CD8-positive, alpha-beta T cell (primary cell): ENCODE measurements at regions of chr1 and their contacts with region 1.

Region 1: GRCh38 chr1:154936555-154937084 is at the start of gene PMVK:
- DNase-seq: peak; percentile 89 to 98 (median 96)
- ATAC-seq: peak; percentile 85
- H3K4me3 ChIP-seq: peak within 1 kb of the TSS; percentile 87 to 90
- H3K4me3 Mint-ChIP-seq: peak within 1 kb of the TSS; percentile 97
- H3K27ac ChIP-seq: peak within 1 kb of the TSS; percentile 94 to 97
- H3K27ac Mint-ChIP-seq: peak within 1 kb of the TSS; percentile 99
- H3K4me1 ChIP-seq: peaks cover 32% of the 10 kb centered on the region
- H3K4me1 Mint-ChIP-seq: peaks cover 49% of the 10 kb centered on the region
- H3K27me3 ChIP-seq: no peaks in the 10 kb centered on the region
- H3K27me3 Mint-ChIP-seq: no peaks in the 10 kb centered on the region
- CTCF ChIP-seq: no peak
- total RNA-seq, gene PMVK: 6.7 to 7.3 TPM

Region 2: DNA sequence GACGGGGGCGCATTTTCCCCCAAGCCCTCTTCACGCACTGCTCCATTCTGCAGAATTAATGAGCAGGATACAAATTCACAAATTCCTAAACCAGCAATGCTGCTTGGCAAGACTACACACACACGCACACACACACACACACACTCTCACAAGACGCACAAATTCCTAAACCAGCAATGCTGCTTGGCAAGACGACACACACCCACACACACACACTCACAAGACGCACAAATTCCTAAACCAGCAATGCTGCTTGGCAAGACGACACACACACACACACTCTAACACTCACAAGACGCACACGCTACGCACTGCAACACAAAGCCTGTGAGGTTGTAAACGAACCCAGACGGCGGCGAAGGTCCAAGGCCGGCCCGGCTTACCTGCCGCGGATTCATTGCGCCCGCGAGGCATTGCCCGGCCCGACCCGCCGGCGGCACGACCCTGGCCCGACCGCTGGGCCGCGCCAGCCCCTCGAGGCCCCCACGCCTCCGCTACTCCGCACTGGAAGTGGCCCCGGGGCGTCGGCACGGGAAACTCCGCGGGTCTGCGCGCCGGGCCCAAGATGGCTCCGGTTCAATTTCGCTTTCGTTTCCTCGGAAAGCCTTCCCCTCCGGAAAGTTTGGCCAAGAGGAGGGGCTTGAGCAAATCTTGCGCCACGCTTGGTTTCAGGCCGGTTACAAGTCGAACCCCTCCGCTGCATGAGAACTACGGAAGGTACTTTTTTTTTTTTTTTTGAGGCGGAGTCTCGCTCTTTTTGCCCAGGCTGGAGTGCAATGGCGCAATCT is 328.8 kb before region 1 on chr1 and contains the start of gene ADAR:
- CTCF ChIA-PET with region 1: no interaction called
- POLR2A ChIA-PET with region 1: interaction called, 5 read pairs
- intact Hi-C with region 1: loop called (anchors 1 kb)
- DNase-seq: peak; percentile 72 to 98 (median 87)
- ATAC-seq: peak; percentile 85
- H3K4me3 ChIP-seq: peak within 1 kb of the TSS; percentile 89 to 90
- H3K4me3 Mint-ChIP-seq: peak within 1 kb of the TSS; percentile 98
- H3K27ac ChIP-seq: peak within 1 kb of the TSS; percentile 92 to 96
- H3K27ac Mint-ChIP-seq: peak within 1 kb of the TSS; percentile 98
- H3K4me1 ChIP-seq: peaks cover 59% of the 10 kb centered on the region
- H3K4me1 Mint-ChIP-seq: peaks cover 73% of the 10 kb centered on the region
- H3K27me3 ChIP-seq: no peaks in the 10 kb centered on the region
- H3K27me3 Mint-ChIP-seq: no peaks in the 10 kb centered on the region
- CTCF ChIP-seq: no peak
- total RNA-seq, gene ADAR: 221 to 238 TPM

Region 3: DNA sequence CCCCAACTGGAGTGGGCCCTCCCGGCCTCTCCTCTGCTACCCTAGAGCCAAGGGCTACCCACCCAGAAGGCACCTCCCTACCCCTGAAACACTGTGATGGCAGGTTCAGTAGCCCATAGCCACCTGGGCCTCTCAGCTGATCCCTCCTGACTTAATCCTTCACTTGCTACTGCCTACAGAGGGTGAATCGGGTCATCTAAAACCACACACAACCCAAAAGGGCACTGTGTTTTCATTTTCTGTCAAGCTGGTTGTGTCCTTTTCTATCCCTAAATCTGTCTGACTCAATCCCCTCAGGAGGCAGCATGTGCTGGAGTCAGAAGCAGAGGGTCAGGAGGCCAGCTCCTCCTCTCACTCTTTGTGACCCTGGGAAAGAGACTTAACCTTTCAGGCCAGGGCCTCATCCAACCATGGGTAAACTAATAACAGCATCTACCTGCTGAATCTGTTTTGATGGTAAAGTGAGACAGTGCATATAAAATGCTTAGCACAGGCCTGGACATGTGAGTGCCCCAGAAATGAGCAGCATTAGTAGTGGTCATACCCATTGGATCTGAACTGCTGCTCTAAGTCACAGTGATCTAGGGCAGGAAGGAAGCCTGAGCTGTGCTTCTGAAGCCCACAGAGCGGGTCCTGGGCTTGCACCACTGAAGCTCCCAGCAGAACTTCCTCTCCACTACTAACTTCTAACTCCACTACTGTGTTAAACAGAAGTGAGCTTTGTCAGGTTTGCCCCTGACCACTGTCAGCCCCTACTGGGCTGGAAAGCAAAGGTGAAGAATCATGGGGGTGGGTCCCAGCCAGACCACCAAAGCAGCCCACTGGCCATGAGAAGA is 11.1 kb before region 1 on chr1:
- CTCF ChIA-PET with region 1: interaction called, 10 read pairs
- POLR2A ChIA-PET with region 1: no interaction called
- intact Hi-C with region 1: no loop called
- DNase-seq: no peak
- ATAC-seq: no peak
- H3K4me3 ChIP-seq: no peak overlapping the region
- H3K4me3 Mint-ChIP-seq: no peak overlapping the region
- H3K27ac ChIP-seq: no peak overlapping the region
- H3K27ac Mint-ChIP-seq: peak overlapping the region; percentile 18
- H3K4me1 ChIP-seq: no peaks in the 10 kb centered on the region
- H3K4me1 Mint-ChIP-seq: peaks cover 9% of the 10 kb centered on the region
- H3K27me3 ChIP-seq: no peaks in the 10 kb centered on the region
- H3K27me3 Mint-ChIP-seq: no peaks in the 10 kb centered on the region
- CTCF ChIP-seq: no peak

Region 4: DNA sequence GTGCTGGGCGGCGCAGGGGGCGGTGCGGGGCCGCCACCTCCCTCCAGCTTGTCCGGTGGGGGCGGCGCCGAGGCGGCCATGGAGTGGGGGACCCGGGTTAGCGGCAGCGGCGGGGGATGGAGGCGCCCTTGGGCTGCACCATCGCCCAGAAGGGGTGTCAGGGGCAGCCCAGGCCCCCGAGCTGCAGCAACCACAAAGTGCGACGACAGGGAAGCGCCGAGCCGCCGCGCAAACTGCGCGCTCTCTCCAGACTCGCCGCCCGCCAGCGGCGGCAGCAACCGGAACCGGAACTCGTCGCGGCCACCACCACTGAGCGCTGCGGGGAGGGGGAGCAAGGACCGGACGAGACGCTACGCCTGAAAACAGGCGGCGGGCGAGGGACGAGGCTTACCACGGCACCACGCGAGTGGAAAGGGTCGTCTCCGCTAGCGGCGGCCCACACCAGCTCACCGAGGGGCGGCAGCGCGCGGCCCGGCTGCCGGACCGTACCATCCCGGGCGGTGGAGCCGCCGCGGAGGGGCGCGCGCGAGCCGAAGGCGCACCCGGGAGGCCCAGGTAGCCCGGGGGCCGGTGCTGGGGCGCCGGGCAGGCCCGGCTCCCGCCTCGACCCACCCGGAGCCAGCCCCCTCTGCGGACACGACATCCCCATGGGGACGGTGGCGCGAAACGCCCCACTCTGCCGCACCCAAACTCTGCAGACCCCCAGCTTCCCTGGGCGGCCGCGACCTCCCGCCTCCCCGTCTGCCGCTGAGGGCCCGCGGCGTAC is 25.1 kb after region 1 on chr1 and contains the start of gene PYGO2:
- CTCF ChIA-PET with region 1: interaction called, 26 read pairs
- POLR2A ChIA-PET with region 1: interaction called, 52 read pairs
- intact Hi-C with region 1: loop called (anchors 1 kb)
- DNase-seq: peak; percentile 62 to 90 (median 80)
- ATAC-seq: peak; percentile 75
- H3K4me3 ChIP-seq: peak within 1 kb of the TSS; percentile 68 to 96
- H3K4me3 Mint-ChIP-seq: peak within 1 kb of the TSS; percentile 91
- H3K27ac ChIP-seq: peak within 1 kb of the TSS; percentile 91 to 95
- H3K27ac Mint-ChIP-seq: peak within 1 kb of the TSS; percentile 93
- H3K4me1 ChIP-seq: peaks cover 27% of the 10 kb centered on the region
- H3K4me1 Mint-ChIP-seq: peaks cover 42% of the 10 kb centered on the region
- H3K27me3 ChIP-seq: no peaks in the 10 kb centered on the region
- H3K27me3 Mint-ChIP-seq: no peaks in the 10 kb centered on the region
- CTCF ChIP-seq: peak; percentile 69
- total RNA-seq, gene PYGO2: 25.1 to 26.7 TPM

Region 5: GRCh38 chr1:154982897-154983648 is 46.5 kb after region 1 on chr1 and contains the start of gene FLAD1:
- CTCF ChIA-PET with region 1: interaction called, 6 read pairs
- POLR2A ChIA-PET with region 1: interaction called, 5 read pairs
- intact Hi-C with region 1: loop called in 1 of 2 experiments (anchors 2 kb)
- DNase-seq: peak; percentile 86 to 99 (median 94)
- ATAC-seq: peak; percentile 98
- H3K4me3 ChIP-seq: peak within 1 kb of the TSS; percentile 57 to 86
- H3K4me3 Mint-ChIP-seq: no peak within 1 kb of the TSS
- H3K27ac ChIP-seq: peak within 1 kb of the TSS; percentile 51 to 82
- H3K27ac Mint-ChIP-seq: no peak within 1 kb of the TSS
- H3K4me1 ChIP-seq: peaks cover 12% of the 10 kb centered on the region
- H3K4me1 Mint-ChIP-seq: peaks cover 12% of the 10 kb centered on the region
- H3K27me3 ChIP-seq: no peaks in the 10 kb centered on the region
- H3K27me3 Mint-ChIP-seq: no peaks in the 10 kb centered on the region
- CTCF ChIP-seq: no peak
- total RNA-seq, gene FLAD1: 17.4 to 19.0 TPM

Region 6: DNA sequence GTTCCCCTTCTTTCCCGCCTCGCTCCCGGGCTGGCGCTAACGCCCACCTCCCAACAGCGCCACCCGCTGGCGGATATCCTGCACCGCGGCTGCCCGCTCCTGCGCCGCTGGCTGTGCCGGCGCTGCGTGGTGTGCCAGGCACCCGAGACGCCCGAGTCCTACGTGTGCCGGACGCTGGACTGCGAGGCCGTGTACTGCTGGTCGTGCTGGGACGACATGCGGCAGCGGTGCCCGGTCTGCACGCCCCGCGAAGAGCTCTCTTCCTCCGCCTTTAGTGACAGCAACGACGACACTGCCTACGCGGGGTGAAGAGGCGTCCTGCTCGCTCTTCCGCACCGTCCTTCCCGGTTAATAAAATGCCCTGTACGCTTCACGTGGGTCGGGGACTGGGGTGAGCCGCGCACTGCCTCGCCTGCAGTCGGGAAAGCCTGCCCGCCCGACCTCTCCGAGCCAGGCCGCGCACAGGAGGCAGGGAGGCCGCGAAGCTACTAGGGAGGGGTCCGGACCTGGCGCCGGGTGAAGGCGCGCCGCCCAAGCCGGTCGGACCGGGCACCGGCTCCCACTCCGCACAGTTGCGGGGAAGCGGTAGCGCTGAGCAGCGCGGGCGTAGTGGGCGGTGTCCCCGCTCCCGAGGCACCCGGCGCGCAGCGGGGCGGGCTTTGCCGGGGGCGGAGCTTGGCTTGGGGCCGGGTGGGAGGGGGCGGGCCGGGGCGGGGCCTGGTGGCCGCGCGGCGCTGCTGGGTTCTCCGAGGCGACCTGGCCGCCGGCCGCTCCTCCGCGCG is 114.1 kb after region 1 on chr1 and contains the start of gene ADAM15:
- CTCF ChIA-PET with region 1: no interaction called
- POLR2A ChIA-PET with region 1: interaction called, 3 read pairs
- intact Hi-C with region 1: loop called in 1 of 2 experiments (anchors 1 kb)
- DNase-seq: peak; percentile 64 to 88 (median 80)
- ATAC-seq: peak; percentile 83
- H3K4me3 ChIP-seq: peak within 1 kb of the TSS; percentile 86 to 94
- H3K4me3 Mint-ChIP-seq: peak within 1 kb of the TSS; percentile 86
- H3K27ac ChIP-seq: peak within 1 kb of the TSS; percentile 45 to 65
- H3K27ac Mint-ChIP-seq: peak within 1 kb of the TSS; percentile 85
- H3K4me1 ChIP-seq: peaks cover 27% of the 10 kb centered on the region
- H3K4me1 Mint-ChIP-seq: peaks cover 19% of the 10 kb centered on the region
- H3K27me3 ChIP-seq: no peaks in the 10 kb centered on the region
- H3K27me3 Mint-ChIP-seq: no peaks in the 10 kb centered on the region
- CTCF ChIP-seq: peak; percentile 99
- total RNA-seq, gene ADAM15: 10.8 to 11.8 TPM

Region 7: GRCh38 chr1:155717041-155717440 is 780.4 kb after region 1 on chr1:
- CTCF ChIA-PET with region 1: no interaction called
- POLR2A ChIA-PET with region 1: no interaction called
- intact Hi-C with region 1: no loop called
- DNase-seq: no peak
- ATAC-seq: no peak
- H3K4me3 ChIP-seq: no peak overlapping the region
- H3K4me3 Mint-ChIP-seq: no peak overlapping the region
- H3K27ac ChIP-seq: no peak overlapping the region
- H3K27ac Mint-ChIP-seq: no peak overlapping the region
- H3K4me1 ChIP-seq: no peaks in the 10 kb centered on the region
- H3K4me1 Mint-ChIP-seq: peaks cover 8% of the 10 kb centered on the region
- H3K27me3 ChIP-seq: no peaks in the 10 kb centered on the region
- H3K27me3 Mint-ChIP-seq: no peaks in the 10 kb centered on the region
- CTCF ChIP-seq: no peak